CD4-positive, alpha-beta T cell (primary cell): ENCODE measurements at regions of chr2 and their contacts with region 1.

Region 1: DNA sequence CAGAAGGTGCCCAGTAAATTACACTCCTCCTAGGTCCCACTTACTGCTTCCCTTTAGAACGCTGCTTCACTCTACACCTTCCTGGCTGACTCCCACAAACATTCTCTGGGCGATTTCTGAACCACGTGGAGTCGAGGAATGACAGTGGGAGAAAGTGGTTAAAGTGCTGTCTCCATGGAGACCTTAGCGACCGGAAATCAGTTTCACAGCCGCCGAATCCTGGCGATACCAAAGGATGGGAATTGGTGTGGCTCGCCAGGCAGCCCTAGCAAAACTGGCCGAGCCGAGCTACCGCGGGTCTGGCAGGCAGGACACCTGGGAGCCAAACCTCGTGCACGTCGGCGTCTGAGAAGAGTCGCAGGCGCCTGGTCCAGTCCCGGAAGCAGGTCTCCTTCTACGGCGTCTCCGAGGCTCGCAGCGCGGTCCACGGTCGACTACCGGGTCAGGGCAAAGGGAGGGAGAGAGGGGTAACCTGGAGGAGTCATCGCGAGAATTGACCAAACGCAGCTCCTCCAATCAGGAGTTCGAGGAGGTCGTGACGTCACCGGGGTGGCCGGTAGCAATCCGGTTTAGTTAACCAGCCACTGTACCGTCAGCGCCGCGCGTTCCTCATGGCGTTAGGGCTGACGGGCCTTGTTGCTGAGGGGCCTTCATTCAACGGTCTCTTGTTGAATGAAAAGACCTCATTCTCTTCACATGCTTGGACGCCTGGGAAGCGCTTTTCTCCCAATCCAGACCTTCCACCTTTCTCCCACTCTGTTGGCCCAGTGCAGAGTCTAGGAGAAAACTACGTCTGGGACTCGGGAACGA is at the start of gene THADA:
- DNase-seq: peak; percentile 90 to 98 (median 94)
- ATAC-seq: peak; percentile 90
- H3K4me3 ChIP-seq: peak within 1 kb of the TSS; percentile 84
- H3K4me3 Mint-ChIP-seq: peak within 1 kb of the TSS; percentile 97
- H3K27ac ChIP-seq: peak within 1 kb of the TSS; percentile 68 to 96
- H3K27ac Mint-ChIP-seq: peak within 1 kb of the TSS; percentile 93
- H3K4me1 ChIP-seq: peaks cover 21% of the 10 kb centered on the region
- H3K4me1 Mint-ChIP-seq: peaks cover 35% of the 10 kb centered on the region
- H3K27me3 ChIP-seq: no peaks in the 10 kb centered on the region
- H3K27me3 Mint-ChIP-seq: no peaks in the 10 kb centered on the region
- CTCF ChIP-seq: no peak
- total RNA-seq, gene THADA: 29.3 to 32.9 TPM

Region 2: DNA sequence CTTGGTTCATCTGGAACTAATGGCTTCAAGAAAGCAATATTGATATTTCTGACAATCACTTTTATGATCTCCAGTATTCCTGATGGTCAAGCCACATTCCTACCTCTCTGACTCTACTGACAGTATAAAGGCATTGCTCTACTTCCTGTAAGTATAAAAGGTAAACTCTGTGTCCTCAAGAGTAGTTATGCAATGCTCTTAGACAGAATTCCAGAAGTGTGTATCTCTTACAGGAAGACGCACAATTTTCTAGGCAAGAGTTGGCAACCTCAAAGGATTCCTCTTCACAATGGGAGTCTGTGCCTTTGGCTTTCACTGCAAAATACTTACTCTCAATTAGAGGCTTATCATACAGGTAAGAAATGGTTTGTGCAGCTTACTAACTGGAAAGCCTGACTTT is 100.1 kb before region 1 on chr2:
- CTCF ChIA-PET with region 1: no interaction called
- POLR2A ChIA-PET with region 1: no interaction called
- intact Hi-C with region 1: no loop called
- DNase-seq: no peak
- ATAC-seq: no peak
- H3K4me3 ChIP-seq: no peak overlapping the region
- H3K4me3 Mint-ChIP-seq: no peak overlapping the region
- H3K27ac ChIP-seq: no peak overlapping the region
- H3K27ac Mint-ChIP-seq: no peak overlapping the region
- H3K4me1 ChIP-seq: no peaks in the 10 kb centered on the region
- H3K4me1 Mint-ChIP-seq: peaks cover 4% of the 10 kb centered on the region
- H3K27me3 ChIP-seq: no peaks in the 10 kb centered on the region
- H3K27me3 Mint-ChIP-seq: no peaks in the 10 kb centered on the region
- CTCF ChIP-seq: no peak

Region 3: DNA sequence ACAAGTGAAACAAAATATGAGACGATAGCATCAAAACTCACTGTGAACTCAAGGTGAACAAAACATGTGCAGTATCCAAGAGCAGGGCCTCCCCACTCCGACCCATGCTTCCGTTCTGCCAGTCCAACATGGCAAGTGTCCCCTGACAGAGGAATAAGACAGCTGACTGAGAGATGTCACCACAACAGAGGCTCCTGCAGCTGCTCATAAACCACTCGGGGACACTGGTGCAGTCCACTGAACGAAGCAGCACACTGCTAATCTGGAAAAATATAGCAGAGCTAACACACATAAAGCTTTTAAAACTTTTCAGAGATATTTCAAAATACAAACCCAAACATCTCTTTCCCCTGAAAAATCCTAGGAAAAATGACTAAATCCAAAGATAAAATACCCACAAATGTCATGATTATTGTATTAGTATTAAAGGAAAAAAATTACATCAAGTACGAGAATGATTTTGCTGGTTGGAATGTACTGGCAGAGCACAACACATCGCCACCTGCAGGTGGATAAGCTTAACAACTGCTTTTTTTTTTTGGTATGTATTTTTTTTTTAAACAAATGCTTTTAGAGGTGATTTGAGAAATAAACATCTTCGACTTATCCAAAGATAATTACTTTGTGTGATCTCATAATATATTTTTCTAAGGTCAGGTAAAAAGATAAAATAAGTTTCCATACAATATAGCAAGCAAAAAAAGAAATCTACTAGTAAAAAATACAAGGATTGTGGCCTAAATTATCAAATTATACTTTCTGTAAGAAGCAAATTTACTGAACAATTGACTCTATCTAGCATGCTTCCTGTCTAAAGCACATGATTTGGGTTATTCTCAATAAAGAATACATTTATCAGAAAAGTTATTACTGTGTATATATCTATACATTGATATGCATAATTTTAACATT is 18.6 kb before region 1 on chr2:
- CTCF ChIA-PET with region 1: interaction called, 16 read pairs
- POLR2A ChIA-PET with region 1: interaction called, 6 read pairs
- intact Hi-C with region 1: no loop called
- DNase-seq: peak in 8 of 14 experiments; percentile 12 to 76 (median 34)
- ATAC-seq: no peak
- H3K4me3 ChIP-seq: no peak overlapping the region
- H3K4me3 Mint-ChIP-seq: no peak overlapping the region
- H3K27ac ChIP-seq: no peak overlapping the region
- H3K27ac Mint-ChIP-seq: no peak overlapping the region
- H3K4me1 ChIP-seq: peaks cover 4% of the 10 kb centered on the region
- H3K4me1 Mint-ChIP-seq: peaks cover 23% of the 10 kb centered on the region
- H3K27me3 ChIP-seq: no peaks in the 10 kb centered on the region
- H3K27me3 Mint-ChIP-seq: no peaks in the 10 kb centered on the region
- CTCF ChIP-seq: peak; percentile 92

Region 4: DNA sequence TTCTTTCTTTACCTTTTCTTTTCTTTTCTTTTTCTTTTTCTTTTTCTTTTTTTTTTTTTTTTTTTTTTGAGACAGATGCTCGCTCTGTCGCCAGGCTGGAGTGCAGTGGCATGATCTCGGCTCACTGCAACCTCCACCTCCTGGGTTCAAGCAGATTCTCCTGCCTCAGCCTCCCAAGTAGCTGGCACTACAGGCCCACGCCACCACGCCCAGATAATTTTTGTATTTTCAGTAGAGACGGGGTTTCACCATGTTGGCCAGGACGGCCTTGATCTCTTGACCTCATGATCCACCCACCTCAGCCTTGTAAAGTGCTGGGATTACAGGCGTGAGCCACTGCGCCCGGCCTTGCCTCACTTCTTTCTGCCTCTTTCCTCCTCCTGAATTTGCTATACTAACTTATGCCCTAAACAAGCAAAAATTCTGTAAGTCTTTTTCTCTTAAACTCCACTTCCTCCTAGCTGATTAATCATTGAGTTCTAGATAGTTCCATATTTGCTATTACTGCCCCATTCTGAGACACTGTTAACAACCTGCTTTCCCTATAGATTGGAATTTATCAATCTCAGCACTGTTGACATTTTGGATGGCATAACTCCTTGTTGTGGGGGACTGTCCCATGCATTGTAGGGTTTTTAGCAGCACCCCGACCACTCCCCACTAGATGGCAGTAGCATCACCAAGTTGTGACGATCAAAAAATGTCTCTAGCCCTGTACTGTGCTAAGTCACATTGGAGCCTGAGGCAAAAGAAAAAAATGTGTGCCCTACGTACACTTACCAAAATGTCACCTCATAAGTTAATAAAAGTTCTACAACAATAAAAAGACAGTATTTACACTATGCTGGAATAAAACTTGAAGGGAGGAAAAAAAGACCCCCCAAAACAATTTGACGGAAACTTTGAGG is 16.4 kb after region 1 on chr2:
- CTCF ChIA-PET with region 1: no interaction called
- POLR2A ChIA-PET with region 1: no interaction called
- intact Hi-C with region 1: no loop called
- DNase-seq: peak; percentile 52 to 85 (median 64)
- ATAC-seq: peak; percentile 96
- H3K4me3 ChIP-seq: no peak overlapping the region
- H3K4me3 Mint-ChIP-seq: no peak overlapping the region
- H3K27ac ChIP-seq: no peak overlapping the region
- H3K27ac Mint-ChIP-seq: no peak overlapping the region
- H3K4me1 ChIP-seq: no peaks in the 10 kb centered on the region
- H3K4me1 Mint-ChIP-seq: no peaks in the 10 kb centered on the region
- H3K27me3 ChIP-seq: no peaks in the 10 kb centered on the region
- H3K27me3 Mint-ChIP-seq: peaks cover 4% of the 10 kb centered on the region
- CTCF ChIP-seq: peak; percentile 80

Region 5: DNA sequence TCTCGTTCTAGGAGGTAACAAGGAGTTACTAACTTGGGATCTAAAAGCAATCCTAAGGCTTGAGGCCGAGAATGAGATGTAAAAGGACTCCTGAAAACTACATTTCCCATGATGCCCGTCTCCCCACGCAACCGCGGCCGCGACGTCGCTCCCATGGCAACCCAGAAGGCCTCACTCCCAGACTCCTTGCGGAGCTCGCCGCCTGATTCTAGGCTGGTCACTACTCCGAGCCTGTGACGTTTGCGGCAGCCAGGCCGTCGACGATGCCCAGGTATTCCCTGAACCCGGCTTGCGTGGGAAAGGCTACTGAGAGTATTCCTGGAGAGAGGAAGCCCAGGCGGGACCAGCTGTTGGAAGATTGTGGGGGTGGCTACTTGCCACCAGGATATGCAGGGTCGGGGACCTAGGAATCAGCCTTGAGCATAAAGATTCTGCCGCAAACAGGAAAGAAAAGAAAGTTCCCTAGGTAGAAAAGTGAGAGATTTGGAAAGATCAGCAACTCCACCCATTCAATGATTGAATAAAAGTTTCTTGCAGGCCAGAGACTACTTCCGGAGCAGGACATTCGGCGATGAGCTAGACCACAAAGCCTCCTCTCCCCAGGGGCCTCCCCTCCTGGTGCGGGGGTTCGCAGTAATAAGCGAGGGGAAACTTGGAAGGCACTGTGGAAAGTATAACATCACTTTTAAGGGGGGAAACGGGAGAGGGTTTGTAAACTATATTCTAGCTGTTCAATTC is 178.2 kb after region 1 on chr2 and contains the start of gene DYNC2LI1:
- CTCF ChIA-PET with region 1: no interaction called
- POLR2A ChIA-PET with region 1: no interaction called
- intact Hi-C with region 1: loop called in 1 of 2 experiments (anchors 10 kb)
- DNase-seq: peak; percentile 51 to 87 (median 66)
- ATAC-seq: peak; percentile 96
- H3K4me3 ChIP-seq: peak within 1 kb of the TSS; percentile 89
- H3K4me3 Mint-ChIP-seq: peak within 1 kb of the TSS; percentile 86
- H3K27ac ChIP-seq: no peak within 1 kb of the TSS
- H3K27ac Mint-ChIP-seq: peak within 1 kb of the TSS; percentile 19
- H3K4me1 ChIP-seq: peaks cover 11% of the 10 kb centered on the region
- H3K4me1 Mint-ChIP-seq: peaks cover 12% of the 10 kb centered on the region
- H3K27me3 ChIP-seq: no peaks in the 10 kb centered on the region
- H3K27me3 Mint-ChIP-seq: peaks cover 9% of the 10 kb centered on the region
- CTCF ChIP-seq: no peak
- total RNA-seq, gene DYNC2LI1: 2.1 to 2.2 TPM

Region 6: GRCh38 chr2:44051593-44052347 is 456.0 kb after region 1 on chr2:
- CTCF ChIA-PET with region 1: no interaction called
- POLR2A ChIA-PET with region 1: no interaction called
- intact Hi-C with region 1: no loop called
- DNase-seq: no peak
- ATAC-seq: no peak
- H3K4me3 ChIP-seq: no peak overlapping the region
- H3K4me3 Mint-ChIP-seq: no peak overlapping the region
- H3K27ac ChIP-seq: no peak overlapping the region
- H3K27ac Mint-ChIP-seq: no peak overlapping the region
- H3K4me1 ChIP-seq: no peaks in the 10 kb centered on the region
- H3K4me1 Mint-ChIP-seq: no peaks in the 10 kb centered on the region
- H3K27me3 ChIP-seq: no peaks in the 10 kb centered on the region
- H3K27me3 Mint-ChIP-seq: no peaks in the 10 kb centered on the region
- CTCF ChIP-seq: no peak